Adrenal gland (tissue), 19 donors: ENCODE measurements at regions of chr20 and their contacts with region 1.

Region 1: GRCh38 chr20:38156888-38157634 is 8.0 kb downstream of the TGM2 start:
- DNase-seq: peak in 2 of 7 donors; percentile 44 to 63
- H3K4me3 ChIP-seq: no peak overlapping the region
- H3K27ac ChIP-seq: peak overlapping the region in 2 of 5 donors; percentile 56 to 83
- H3K4me1 ChIP-seq: peaks cover 9 to 34% of the 10 kb centered on the region in 2 donors
- H3K27me3 ChIP-seq: no peaks in the 10 kb centered on the region
- CTCF ChIP-seq: no peak
- POLR2A ChIP-seq: no peak

Region 2: GRCh38 chr20:37946946-37947345 is 210.1 kb before region 1 on chr20:
- intact Hi-C with region 1: no loop called
- DNase-seq: peak in 1 of 7 donors; percentile 21
- H3K4me3 ChIP-seq: no peak overlapping the region
- H3K27ac ChIP-seq: no peak overlapping the region
- H3K4me1 ChIP-seq: no peaks in the 10 kb centered on the region
- H3K27me3 ChIP-seq: no peaks in the 10 kb centered on the region
- CTCF ChIP-seq: no peak
- POLR2A ChIP-seq: no peak

Region 3: DNA sequence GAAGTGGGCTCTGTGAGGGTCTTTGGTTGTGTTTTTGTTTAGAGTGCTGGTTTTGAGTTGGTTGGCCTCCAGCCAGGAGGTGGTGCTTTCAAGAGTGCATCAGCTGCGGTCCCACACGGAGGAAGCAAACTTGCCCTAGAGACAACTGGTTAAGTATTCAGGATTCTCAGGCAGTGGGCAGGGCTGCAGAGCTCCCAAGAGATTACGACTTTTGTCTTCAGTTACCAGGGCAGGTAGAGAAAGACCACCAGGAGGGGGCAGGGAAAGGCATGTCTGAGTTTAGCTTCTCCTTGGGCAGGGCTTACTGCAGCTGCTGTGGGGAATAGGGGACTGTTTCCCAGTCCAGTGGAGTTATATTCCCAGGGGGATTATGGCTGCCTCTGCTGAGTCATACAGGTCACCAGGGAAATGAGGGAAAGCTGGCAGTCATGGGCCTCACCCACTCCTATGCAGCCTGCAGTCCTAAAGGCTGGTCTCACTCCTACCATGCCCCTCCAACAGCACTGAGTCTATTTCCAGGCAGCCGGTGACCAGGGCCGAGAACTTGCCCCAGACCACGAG is 188.1 kb before region 1 on chr20:
- intact Hi-C with region 1: no loop called
- DNase-seq: peak in 2 of 7 donors; percentile 2 to 41
- H3K4me3 ChIP-seq: no peak overlapping the region
- H3K27ac ChIP-seq: no peak overlapping the region
- H3K4me1 ChIP-seq: no peaks in the 10 kb centered on the region
- H3K27me3 ChIP-seq: no peaks in the 10 kb centered on the region
- CTCF ChIP-seq: no peak
- POLR2A ChIP-seq: no peak

Region 4: GRCh38 chr20:38075161-38075998 is 81.7 kb before region 1 on chr20:
- intact Hi-C with region 1: loop called in 1 of 2 experiments (anchors 5 kb)
- DNase-seq: no peak
- H3K4me3 ChIP-seq: no peak overlapping the region
- H3K27ac ChIP-seq: peak overlapping the region in 2 of 5 donors; percentile 17 to 59
- H3K4me1 ChIP-seq: peaks cover 0 to 35% of the 10 kb centered on the region in 2 donors
- H3K27me3 ChIP-seq: no peaks in the 10 kb centered on the region
- CTCF ChIP-seq: no peak
- POLR2A ChIP-seq: no peak